ENCODE measurements at regions of chr12 and their contacts with region 1.

Region 1: GRCh38 chr12:39723831-39724230 is 104.2 kb upstream of the ABCD2 start:
- DNase-seq: no peak
- ATAC-seq: no peak
- H3K4me3 ChIP-seq: no peak overlapping the region
- H3K27ac ChIP-seq: no peak overlapping the region
- H3K4me1 ChIP-seq: no peaks in the 10 kb centered on the region
- H3K27me3 ChIP-seq: no peaks in the 10 kb centered on the region
- CTCF ChIP-seq: no peak
- POLR2A ChIP-seq: no peak
- RAD21 ChIP-seq: no peak

Region 2: DNA sequence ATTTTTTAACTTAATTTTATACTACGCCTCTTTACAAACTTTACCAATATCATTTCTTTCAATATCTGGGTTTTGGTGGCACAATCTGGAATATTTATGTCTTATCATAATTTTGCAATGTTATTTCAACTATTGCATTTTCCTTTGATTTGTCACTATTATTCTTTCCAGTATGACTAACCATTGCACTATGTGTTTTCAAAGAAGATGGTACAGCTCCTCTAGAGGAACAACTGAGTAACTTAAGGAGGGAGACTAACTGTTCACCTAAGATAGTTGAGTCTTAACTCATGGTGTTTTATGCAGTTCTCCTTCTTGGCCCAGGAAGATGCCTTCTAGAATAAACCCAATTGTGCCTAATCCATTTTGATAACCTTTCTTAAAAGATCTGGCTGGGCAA is 220.4 kb before region 1 on chr12:
- CTCF ChIA-PET with region 1: no interaction called
- POLR2A ChIA-PET with region 1: no interaction called
- RAD21 ChIA-PET with region 1: no interaction called
- intact Hi-C with region 1: no loop called
- DNase-seq: peak; percentile 21
- ATAC-seq: peak; percentile 82
- H3K4me3 ChIP-seq: no peak overlapping the region
- H3K27ac ChIP-seq: no peak overlapping the region
- H3K4me1 ChIP-seq: peaks cover 0 to 6% of the 10 kb centered on the region in 2 experiments; a peak in 2 of 4 replicates
- H3K27me3 ChIP-seq: no peaks in the 10 kb centered on the region
- CTCF ChIP-seq: peak in 2 of 3 experiments; percentile 40 to 58; a peak in 4 of 6 replicates
- POLR2A ChIP-seq: no peak
- RAD21 ChIP-seq: no peak; the same call in 1 of the 2 replicates

Region 3: GRCh38 chr12:39780919-39781467 is 57.2 kb after region 1 on chr12:
- CTCF ChIA-PET with region 1: no interaction called
- POLR2A ChIA-PET with region 1: no interaction called
- RAD21 ChIA-PET with region 1: no interaction called
- intact Hi-C with region 1: loop called (anchors 10 kb)
- DNase-seq: no peak
- ATAC-seq: no peak
- H3K4me3 ChIP-seq: no peak overlapping the region
- H3K27ac ChIP-seq: no peak overlapping the region
- H3K4me1 ChIP-seq: no peaks in the 10 kb centered on the region
- H3K27me3 ChIP-seq: no peaks in the 10 kb centered on the region
- CTCF ChIP-seq: no peak
- POLR2A ChIP-seq: no peak
- RAD21 ChIP-seq: no peak

Measured in HCT116 (cell line).